CD4-positive, alpha-beta memory T cell (primary cell): ENCODE measurements at regions of chr3 and their contacts with region 1.

Region 1: DNA sequence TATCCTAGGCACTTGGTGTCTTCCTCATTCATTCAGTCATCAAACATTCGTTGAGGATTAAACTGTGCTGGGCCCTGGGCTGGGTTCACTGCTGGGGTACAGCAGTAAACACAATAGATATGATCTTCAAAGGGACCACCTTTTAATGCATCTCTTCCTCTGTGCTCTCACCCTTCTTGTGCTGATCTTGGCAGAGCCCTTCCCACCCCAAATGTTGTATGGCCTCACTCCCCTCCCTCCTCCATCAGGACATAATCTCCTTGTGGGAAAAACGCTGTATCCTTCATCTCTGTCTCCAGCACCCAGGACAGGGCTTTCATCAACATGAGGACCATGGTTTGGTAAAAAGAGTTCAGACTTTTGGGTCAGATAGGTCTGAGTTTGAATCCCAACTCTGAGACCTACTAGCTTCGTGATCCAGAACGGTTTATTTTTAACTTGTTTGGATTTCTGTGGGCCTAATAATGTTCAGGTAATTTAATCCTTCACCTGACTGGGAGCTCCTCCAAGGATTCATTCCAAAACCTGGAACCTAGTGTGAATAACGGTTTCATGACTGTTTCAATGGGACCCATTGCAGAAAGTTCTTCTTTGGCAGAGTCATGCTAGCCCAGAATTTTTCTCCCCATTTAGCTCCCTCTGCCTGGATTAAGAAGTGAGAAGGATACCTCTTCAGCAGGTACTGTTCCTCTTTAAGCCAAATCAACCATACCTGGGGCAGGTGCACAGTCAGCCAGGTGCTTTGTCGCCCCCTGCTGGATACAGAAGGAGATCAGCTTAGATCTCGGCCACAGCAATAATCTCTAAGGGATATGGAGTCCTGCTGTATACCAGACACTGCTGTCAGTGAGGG is 5.2 kb upstream of the WNT7A start:
- DNase-seq: peak; percentile 77 to 80 (median 78)
- H3K4me3 ChIP-seq: no peak overlapping the region
- H3K4me3 Mint-ChIP-seq: peak overlapping the region in 2 of 8 donors; percentile 60 to 74
- H3K27ac ChIP-seq: no peak overlapping the region
- H3K27ac Mint-ChIP-seq: peak overlapping the region in 5 of 7 donors; percentile 1 to 76 (median 63)
- H3K4me1 ChIP-seq: peaks cover 20% of the 10 kb centered on the region
- H3K4me1 Mint-ChIP-seq: peaks cover 4 to 31% (median 16%) of the 10 kb centered on the region in 4 donors
- H3K27me3 ChIP-seq: no peaks in the 10 kb centered on the region
- H3K27me3 Mint-ChIP-seq: peaks cover 16 to 17% of the 10 kb centered on the region in 2 donors

Region 2: GRCh38 chr3:13479581-13480339 is 405.3 kb before region 1 on chr3 and contains the start of gene HDAC11:
- CTCF ChIA-PET with region 1: interaction called, 9 read pairs
- POLR2A ChIA-PET with region 1: interaction called, 9 read pairs
- intact Hi-C with region 1: loop called (anchors 5 kb)
- DNase-seq: peak; percentile 96 to 97 (median 96)
- H3K4me3 ChIP-seq: peak within 1 kb of the TSS; percentile 52 to 92
- H3K4me3 Mint-ChIP-seq: peak within 1 kb of the TSS; percentile 91 to 95 (median 94)
- H3K27ac ChIP-seq: peak within 1 kb of the TSS; percentile 90
- H3K27ac Mint-ChIP-seq: peak within 1 kb of the TSS; percentile 94 to 96 (median 96)
- H3K4me1 ChIP-seq: peaks cover 28% of the 10 kb centered on the region
- H3K4me1 Mint-ChIP-seq: peaks cover 6 to 35% (median 20%) of the 10 kb centered on the region in 4 donors
- H3K27me3 ChIP-seq: no peaks in the 10 kb centered on the region
- H3K27me3 Mint-ChIP-seq: peaks cover 0 to under 1% of the 10 kb centered on the region in 2 donors
- total RNA-seq, gene HDAC11: 7.1 to 7.6 TPM

Region 3: DNA sequence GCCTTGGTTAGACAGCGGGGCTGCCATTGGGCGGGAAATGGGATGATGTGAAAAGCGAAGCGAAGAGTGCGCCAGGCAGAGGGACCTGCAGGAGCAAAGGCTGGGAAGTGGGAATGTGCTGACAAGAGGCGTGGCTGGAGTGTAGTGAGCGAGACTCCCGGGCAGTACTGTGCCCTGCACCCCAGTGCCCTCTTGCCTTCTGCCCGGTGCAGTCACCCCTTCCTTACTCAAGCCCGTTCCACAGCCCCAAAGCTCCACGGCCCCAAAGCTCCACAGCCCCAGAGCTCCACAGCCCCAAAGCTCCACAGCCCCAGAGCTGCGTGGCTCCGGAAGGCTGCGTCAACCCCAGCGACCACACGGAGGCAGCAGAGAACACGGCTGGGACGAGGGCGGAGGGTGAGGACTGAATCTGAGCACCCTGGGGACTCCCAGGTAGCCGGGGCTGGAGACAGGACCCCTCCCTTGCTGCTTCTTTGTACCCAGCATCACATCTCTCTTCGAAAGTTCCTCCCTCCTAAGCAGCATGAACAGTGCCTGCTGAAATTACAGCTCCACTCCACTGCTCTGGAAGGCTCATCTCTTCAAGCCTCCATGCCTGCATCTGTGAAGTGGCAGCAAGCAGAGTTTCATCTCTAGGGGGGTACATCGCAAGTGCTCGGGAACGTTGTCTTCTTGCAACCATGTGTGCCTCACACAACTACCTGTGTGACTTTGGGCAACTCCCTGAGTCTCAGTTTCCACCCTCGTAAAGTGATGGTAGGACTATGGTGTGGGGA is 227.2 kb before region 1 on chr3:
- CTCF ChIA-PET with region 1: interaction called, 996 read pairs
- POLR2A ChIA-PET with region 1: interaction called, 142 read pairs
- intact Hi-C with region 1: loop called (anchors 1 kb)
- DNase-seq: peak; percentile 62 to 73 (median 69)
- H3K4me3 ChIP-seq: no peak overlapping the region
- H3K4me3 Mint-ChIP-seq: peak overlapping the region in 2 of 8 donors; percentile 55 to 57
- H3K27ac ChIP-seq: no peak overlapping the region
- H3K27ac Mint-ChIP-seq: peak overlapping the region in 2 of 7 donors; percentile 42 to 51
- H3K4me1 ChIP-seq: peaks cover 31% of the 10 kb centered on the region
- H3K4me1 Mint-ChIP-seq: peaks cover 15 to 46% (median 28%) of the 10 kb centered on the region in 4 donors
- H3K27me3 ChIP-seq: peaks cover 6% of the 10 kb centered on the region
- H3K27me3 Mint-ChIP-seq: peaks cover 3 to 5% of the 10 kb centered on the region in 2 donors

Region 4: DNA sequence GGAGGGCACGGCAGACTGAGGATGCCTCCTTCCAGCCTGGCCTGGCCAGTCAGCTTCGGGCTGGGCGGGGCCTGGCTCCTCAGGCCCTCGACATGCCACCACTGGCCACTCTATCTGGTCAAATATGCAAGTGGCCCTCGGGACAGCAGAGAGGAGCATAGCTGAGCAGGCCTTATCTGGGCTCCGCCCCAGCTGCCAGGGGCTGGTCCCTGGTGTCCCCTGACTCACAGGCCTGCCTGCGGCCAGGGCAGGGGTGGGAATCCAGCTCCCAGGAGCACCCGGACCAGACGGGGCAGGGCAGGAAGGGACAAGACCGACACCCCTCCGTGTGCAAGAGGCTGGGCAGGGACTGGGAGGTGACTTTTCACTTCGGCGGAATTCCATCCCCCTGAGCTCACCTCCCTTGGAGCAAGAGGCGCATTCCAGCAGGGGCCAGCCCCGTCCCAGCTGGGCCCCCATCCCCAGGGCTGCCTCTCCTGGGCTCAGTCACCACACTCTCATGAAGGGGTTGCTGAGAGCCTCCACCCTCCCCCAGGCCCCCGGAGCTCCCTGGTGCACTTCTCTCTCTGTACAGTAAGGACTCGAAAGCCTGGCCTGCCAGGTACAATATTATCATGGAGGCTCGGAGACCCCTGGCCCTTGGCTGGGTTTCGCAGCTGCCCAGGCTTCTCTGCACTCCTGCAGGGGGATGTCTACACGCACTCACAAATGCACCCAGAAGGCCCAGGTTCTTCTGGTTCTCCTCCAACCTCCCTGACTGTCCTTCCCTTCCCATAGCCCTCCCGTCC is 34.7 kb before region 1 on chr3:
- CTCF ChIA-PET with region 1: interaction called, 11 read pairs
- POLR2A ChIA-PET with region 1: interaction called, 9 read pairs
- intact Hi-C with region 1: no loop called
- DNase-seq: no peak
- H3K4me3 ChIP-seq: no peak overlapping the region
- H3K4me3 Mint-ChIP-seq: no peak overlapping the region
- H3K27ac ChIP-seq: no peak overlapping the region
- H3K27ac Mint-ChIP-seq: peak overlapping the region in 3 of 7 donors; percentile 12 to 42 (median 28)
- H3K4me1 ChIP-seq: peaks cover 18% of the 10 kb centered on the region
- H3K4me1 Mint-ChIP-seq: peaks cover 18 to 59% (median 37%) of the 10 kb centered on the region in 4 donors
- H3K27me3 ChIP-seq: no peaks in the 10 kb centered on the region
- H3K27me3 Mint-ChIP-seq: peaks cover 0 to 2% of the 10 kb centered on the region in 2 donors

Region 5: DNA sequence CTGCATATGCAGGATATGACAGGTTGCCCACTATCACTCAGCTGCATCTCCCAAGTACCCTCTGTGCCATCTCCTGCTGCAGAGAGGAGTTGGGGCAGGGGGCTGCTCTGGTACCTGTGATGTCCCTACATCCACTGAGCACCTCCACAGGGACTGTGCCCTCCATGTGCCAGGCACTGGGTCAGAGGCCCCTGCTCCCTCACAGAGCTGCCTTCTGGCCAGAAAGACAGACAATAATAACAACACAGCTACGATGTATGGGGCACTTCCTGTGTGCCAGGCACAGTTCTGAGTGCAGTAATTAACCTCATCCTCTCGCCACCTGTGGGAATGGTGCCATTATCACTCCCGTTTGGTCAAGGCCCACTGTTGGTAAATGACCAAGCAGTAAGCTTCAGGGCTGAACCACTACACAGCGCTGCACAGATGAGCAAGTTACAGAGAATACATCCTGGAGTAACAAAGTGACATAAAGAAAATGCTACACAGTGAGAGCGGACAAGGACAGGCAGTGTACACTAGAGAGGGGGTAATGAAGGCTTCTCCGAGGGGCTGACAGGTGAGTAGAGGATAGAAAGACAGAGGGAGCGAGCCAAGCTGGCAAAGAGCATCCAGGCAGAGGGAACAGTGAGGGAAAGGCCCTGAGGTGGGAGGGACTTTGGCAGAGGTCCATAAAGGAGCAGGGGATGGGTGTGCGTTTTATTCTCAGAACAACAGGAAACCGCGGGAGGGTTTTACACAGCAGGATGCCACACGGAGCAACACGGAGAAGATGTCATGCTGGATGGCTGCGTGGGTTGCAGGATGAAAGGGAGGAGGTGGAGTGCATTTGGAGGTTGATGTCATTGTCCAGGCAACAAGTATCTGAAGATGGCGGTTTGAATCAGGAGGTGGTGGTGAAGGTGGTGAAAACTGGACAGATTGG is 18.8 kb before region 1 on chr3:
- CTCF ChIA-PET with region 1: interaction called, 48 read pairs
- POLR2A ChIA-PET with region 1: interaction called, 137 read pairs
- intact Hi-C with region 1: loop called (anchors 1 kb)
- DNase-seq: peak; percentile 80 to 87 (median 84)
- H3K4me3 ChIP-seq: peak overlapping the region in 1 of 2 donors; percentile 36
- H3K4me3 Mint-ChIP-seq: peak overlapping the region; percentile 72 to 84 (median 79)
- H3K27ac ChIP-seq: peak overlapping the region; percentile 64
- H3K27ac Mint-ChIP-seq: peak overlapping the region; percentile 83 to 100 (median 98)
- H3K4me1 ChIP-seq: peaks cover 72% of the 10 kb centered on the region
- H3K4me1 Mint-ChIP-seq: peaks cover 48 to 75% (median 63%) of the 10 kb centered on the region in 4 donors
- H3K27me3 ChIP-seq: no peaks in the 10 kb centered on the region
- H3K27me3 Mint-ChIP-seq: no peaks in the 10 kb centered on the region